Left cardiac atrium (tissue), 4 donors: ENCODE measurements at regions of chr6 and their contacts with region 1.

Region 1: DNA sequence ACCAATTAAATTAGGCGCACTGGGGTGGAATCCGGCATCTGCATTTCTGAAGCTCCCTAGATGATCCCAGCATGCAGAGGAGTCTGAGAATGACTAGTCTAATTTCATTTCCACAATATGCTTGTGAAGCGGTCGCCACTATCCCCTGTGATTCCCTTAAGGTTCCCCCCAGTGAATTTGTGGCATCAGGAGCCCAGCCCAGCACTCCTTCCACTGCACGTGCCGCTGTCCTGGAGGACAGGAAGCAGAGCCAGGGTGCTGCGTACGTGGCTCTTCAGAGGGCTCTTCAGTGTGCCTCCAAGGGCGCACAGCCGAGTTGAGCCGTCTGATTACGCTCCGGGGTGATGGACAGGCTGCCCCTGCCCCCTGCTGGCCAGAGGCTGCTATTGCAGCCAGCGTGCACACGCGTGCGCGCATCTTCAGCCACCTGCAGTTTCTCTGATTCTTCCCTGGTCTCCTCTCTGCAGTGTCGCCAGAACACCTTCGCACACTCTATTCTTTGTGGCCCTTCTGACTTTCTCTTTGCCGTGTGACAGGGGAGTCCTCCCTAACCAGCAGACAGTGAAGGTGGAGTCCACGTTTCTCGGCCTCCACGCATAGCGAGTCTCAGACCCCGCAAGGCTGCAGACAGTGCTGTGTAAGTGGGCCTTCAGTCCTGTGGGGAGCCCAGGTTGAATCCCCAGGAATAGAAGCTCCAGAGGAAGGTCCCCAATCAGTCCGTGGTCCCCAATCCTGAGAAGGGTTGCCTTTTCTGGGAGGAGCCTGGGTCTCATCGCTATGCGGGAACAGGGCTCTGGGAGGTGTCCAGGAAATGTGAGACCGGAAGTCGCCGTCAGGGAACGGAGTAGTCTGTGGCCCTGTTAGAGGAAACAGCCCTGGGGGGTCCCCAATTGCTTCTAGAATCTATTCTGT is 16.5 kb upstream of the NCR2 start:
- DNase-seq: peak; percentile 82
- ATAC-seq: peak; percentile 97 to 98

Region 2: GRCh38 chr6:41092421-41093140 is 226.3 kb before region 1 on chr6:
- intact Hi-C with region 1: loop called in 1 of 2 experiments (anchors 10 kb)
- DNase-seq: no peak
- ATAC-seq: no peak

Region 3: GRCh38 chr6:41200296-41200900 is 118.5 kb before region 1 on chr6:
- intact Hi-C with region 1: no loop called
- DNase-seq: peak; percentile 51
- ATAC-seq: peak; percentile 55

Region 4: GRCh38 chr6:41278699-41279405 is 40.1 kb before region 1 on chr6:
- intact Hi-C with region 1: loop called in 1 of 2 experiments (anchors 2 kb)
- DNase-seq: peak; percentile 59
- ATAC-seq: peak; percentile 55 to 68